H1 (cell line): ENCODE measurements at regions of chr11 and their contacts with region 1.

Region 1: GRCh38 chr11:124758317-124759203 is 3.5 kb downstream of the ESAM start:
- DNase-seq: peak; percentile 70 to 90
- H3K4me3 ChIP-seq: peak overlapping the region; percentile 18 to 58 (median 34); a peak in 7 of 8 replicates
- H3K27ac ChIP-seq: no peak overlapping the region
- H3K4me1 ChIP-seq: peaks cover 6 to 43% (median 27%) of the 10 kb centered on the region in 4 experiments
- H3K27me3 ChIP-seq: peaks cover 76 to 98% (median 91%) of the 10 kb centered on the region in 4 experiments
- CTCF ChIP-seq: peak; percentile 74 to 88 (median 86)
- EP300 ChIP-seq: no peak
- POLR2A ChIP-seq: no peak
- RAD21 ChIP-seq: peak; percentile 51 to 65

Region 2: DNA sequence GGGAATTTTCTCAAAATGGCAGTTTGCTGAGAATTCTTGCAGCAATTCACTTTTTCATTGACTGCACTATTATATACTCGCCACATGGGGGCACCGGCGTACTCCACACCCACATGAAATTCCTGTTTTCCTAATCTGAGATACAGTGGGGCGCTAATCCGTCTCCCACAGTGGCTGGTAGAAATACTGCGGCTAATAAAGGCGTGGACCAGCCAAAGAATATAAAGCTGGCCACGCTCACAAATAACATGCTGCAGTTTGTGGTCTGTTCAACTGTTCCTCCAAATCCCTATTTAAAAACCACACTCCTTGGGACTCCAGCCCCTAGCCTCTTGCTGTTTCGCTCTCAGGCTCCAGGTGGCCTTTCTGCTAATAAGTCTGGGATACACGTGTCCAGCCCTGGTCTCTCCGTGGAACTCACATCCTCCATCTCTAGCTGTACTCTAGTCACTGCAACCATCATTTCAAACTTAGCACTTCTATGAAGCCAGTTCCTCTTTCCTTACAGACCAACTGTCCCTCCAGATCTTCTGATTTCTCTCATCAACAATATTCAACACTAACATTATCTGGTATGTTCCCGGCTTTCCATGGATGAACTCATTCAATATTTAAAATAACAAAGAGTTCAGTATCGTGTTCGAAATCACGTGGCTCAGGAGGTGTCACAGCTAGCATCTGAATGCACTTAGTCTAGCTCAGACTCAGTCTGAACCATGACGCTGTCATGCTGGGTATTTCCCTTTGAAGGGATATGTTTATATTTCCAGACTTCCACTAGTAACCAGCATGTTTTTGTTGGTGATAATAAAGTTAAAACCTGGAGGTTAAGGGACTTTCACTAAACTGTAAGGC is 113.9 kb before region 1 on chr11:
- CTCF ChIA-PET with region 1: interaction called, 69 read pairs
- POLR2A ChIA-PET with region 1: interaction called, 4 read pairs
- DNase-seq: peak in 1 of 2 experiments; percentile 68
- H3K4me3 ChIP-seq: peak overlapping the region in 1 of 4 experiments; percentile 37; a peak in 2 of 8 replicates
- H3K27ac ChIP-seq: no peak overlapping the region
- H3K4me1 ChIP-seq: peaks cover 0 to 4% (median 2%) of the 10 kb centered on the region in 4 experiments; a peak in 3 of 7 replicates
- H3K27me3 ChIP-seq: no peaks in the 10 kb centered on the region
- CTCF ChIP-seq: peak; percentile 38 to 87 (median 75)
- EP300 ChIP-seq: no peak
- POLR2A ChIP-seq: no peak
- RAD21 ChIP-seq: peak; percentile 85

Region 3: GRCh38 chr11:124673333-124674167 is 85.0 kb before region 1 on chr11 and contains the starts of genes SIAE and SPA17:
- CTCF ChIA-PET with region 1: interaction called, 56 read pairs
- POLR2A ChIA-PET with region 1: interaction called, 5 read pairs
- DNase-seq: peak; percentile 86 to 96
- H3K4me3 ChIP-seq: peak within 1 kb of the TSS; percentile 71 to 90 (median 79)
- H3K27ac ChIP-seq: no peak within 1 kb of the TSS
- H3K4me1 ChIP-seq: no peaks in the 10 kb centered on the region; a peak in 1 of 7 replicates
- H3K27me3 ChIP-seq: peaks cover 0 to 15% (median 5%) of the 10 kb centered on the region in 4 experiments; a peak in 6 of 7 replicates
- CTCF ChIP-seq: no peak
- EP300 ChIP-seq: peak in 1 of 2 experiments; percentile 82; a peak in 1 of 3 replicates
- POLR2A ChIP-seq: peak in 1 of 2 experiments; percentile 80; a peak in 2 of 3 replicates
- RAD21 ChIP-seq: no peak
- total RNA-seq, gene SIAE: 1.7 and 2.3 TPM in 2 replicates
- total RNA-seq, gene SPA17: 4.2 and 5.2 TPM in 2 replicates

Region 4: DNA sequence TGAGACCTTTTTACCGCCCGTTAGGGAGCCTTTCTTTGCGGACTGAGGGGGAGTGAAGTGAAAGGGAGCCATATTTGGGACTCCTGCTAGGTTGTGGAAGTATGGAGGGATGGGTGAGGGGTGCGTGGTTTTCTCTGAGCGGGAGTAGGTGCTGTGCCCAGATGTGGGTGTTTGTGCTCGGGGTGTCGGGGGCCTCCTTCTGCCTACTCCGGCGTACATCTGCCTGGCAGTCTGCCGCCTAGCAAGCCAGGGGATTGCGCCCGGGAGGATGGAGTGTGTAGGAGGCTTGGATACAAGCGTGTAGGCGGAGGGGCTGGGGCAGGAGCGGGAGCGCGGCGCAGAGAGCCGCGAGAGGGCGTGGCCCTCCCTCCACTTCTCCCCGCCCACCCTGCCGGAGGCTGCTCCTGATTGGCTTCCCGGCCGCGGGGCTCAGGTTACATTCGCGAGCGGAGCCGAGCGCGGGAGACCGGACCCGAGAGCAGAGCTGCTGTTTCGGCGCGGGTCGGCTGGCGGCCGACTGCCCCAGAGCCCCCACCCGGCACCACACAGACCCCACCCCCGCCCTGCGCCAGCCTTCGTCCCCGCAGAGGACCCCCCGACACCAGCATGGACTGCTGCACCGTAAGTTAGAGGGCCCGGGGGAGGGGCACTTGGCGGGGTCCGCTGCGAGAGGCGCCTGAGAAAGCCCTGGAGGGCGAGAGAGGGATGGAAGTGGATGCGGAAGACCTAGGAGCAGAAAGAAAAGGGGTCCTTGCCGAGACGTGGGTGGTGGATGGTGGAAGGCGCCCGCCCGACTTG is 18.9 kb before region 1 on chr11 and contains the start of gene NRGN:
- CTCF ChIA-PET with region 1: interaction called, 382 read pairs
- POLR2A ChIA-PET with region 1: interaction called, 13 read pairs
- DNase-seq: peak; percentile 76 to 95
- H3K4me3 ChIP-seq: peak within 1 kb of the TSS; percentile 40 to 68 (median 62)
- H3K27ac ChIP-seq: no peak within 1 kb of the TSS
- H3K4me1 ChIP-seq: peaks cover 0 to 15% (median 2%) of the 10 kb centered on the region in 4 experiments; a peak in 5 of 7 replicates
- H3K27me3 ChIP-seq: peaks cover 69 to 93% (median 83%) of the 10 kb centered on the region in 4 experiments
- CTCF ChIP-seq: no peak
- EP300 ChIP-seq: no peak
- POLR2A ChIP-seq: no peak
- RAD21 ChIP-seq: no peak
- total RNA-seq, gene NRGN: 0.60 and 0.75 TPM in 2 replicates

Region 5: DNA sequence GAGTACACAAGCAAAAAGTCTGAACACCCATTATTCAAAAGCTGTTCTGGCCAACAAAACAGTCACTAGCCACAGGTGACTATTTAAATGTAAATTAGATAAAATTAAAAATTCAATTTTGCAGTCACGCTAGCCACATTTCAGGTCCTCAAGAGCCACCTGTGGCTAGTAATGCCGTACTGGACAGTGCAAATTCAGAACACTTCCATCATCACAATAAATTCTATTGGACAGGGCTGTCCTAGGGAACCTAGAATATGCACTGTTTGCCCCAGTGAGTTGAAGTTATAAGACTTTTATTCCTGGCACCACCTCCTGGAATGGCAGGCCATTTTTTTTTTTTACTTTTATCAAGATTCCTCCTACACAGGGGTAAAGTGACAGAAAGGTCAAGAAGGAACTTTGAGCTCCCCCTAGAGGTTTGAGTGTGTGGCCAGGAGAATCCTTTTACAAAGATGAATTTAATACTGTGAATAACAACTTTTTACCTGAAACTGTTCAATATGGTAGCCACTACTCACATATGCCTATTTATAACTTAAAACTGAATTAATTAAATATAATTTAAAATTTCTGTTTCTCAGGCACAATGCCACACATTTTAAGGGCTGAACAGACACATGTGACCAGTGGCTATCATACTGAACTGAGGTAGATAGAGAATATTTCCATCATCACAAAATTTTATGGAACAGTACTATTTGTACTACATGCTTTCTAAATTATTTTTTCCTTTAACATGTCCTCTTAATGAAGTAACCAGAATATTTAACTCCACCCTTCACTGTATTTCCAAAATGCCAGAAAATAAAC is 35.1 kb after region 1 on chr11:
- CTCF ChIA-PET with region 1: interaction called, 111 read pairs
- POLR2A ChIA-PET with region 1: interaction called, 26 read pairs
- DNase-seq: no peak
- H3K4me3 ChIP-seq: peak overlapping the region in 1 of 4 experiments; percentile 44; a peak in 1 of 8 replicates
- H3K27ac ChIP-seq: no peak overlapping the region
- H3K4me1 ChIP-seq: peaks cover 3 to 28% (median 7%) of the 10 kb centered on the region in 4 experiments; a peak in 6 of 7 replicates
- H3K27me3 ChIP-seq: no peaks in the 10 kb centered on the region
- CTCF ChIP-seq: peak in 2 of 3 experiments; percentile 43 to 62; a peak in 3 of 4 replicates
- EP300 ChIP-seq: no peak
- POLR2A ChIP-seq: no peak
- RAD21 ChIP-seq: peak; percentile 52 to 54

Region 6: DNA sequence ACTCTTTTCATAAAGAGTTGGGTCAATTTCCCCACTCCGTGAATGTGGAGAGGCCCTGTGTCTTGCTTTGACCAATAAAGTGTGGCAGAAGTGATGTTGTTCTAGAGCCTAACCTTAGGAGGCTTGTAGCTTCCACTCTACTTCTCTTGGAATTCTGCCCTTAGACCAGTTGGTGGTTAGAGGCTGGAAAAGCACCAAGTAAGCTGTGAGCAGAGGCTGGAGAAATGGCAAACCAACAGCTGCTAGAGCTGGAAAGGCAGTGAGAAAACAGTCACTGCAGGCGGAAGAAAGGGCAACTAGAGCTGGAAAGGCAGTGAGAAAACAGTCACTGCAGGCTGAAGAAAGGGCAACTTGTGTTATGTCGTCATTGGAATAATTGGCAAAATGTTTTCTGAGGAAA is 71.4 kb after region 1 on chr11:
- CTCF ChIA-PET with region 1: interaction called, 14 read pairs
- POLR2A ChIA-PET with region 1: interaction called, 3 read pairs
- DNase-seq: no peak
- H3K4me3 ChIP-seq: no peak overlapping the region
- H3K27ac ChIP-seq: no peak overlapping the region
- H3K4me1 ChIP-seq: no peaks in the 10 kb centered on the region; a peak in 1 of 7 replicates
- H3K27me3 ChIP-seq: no peaks in the 10 kb centered on the region; a peak in 1 of 7 replicates
- CTCF ChIP-seq: no peak
- EP300 ChIP-seq: no peak
- POLR2A ChIP-seq: no peak
- RAD21 ChIP-seq: no peak

Region 7: DNA sequence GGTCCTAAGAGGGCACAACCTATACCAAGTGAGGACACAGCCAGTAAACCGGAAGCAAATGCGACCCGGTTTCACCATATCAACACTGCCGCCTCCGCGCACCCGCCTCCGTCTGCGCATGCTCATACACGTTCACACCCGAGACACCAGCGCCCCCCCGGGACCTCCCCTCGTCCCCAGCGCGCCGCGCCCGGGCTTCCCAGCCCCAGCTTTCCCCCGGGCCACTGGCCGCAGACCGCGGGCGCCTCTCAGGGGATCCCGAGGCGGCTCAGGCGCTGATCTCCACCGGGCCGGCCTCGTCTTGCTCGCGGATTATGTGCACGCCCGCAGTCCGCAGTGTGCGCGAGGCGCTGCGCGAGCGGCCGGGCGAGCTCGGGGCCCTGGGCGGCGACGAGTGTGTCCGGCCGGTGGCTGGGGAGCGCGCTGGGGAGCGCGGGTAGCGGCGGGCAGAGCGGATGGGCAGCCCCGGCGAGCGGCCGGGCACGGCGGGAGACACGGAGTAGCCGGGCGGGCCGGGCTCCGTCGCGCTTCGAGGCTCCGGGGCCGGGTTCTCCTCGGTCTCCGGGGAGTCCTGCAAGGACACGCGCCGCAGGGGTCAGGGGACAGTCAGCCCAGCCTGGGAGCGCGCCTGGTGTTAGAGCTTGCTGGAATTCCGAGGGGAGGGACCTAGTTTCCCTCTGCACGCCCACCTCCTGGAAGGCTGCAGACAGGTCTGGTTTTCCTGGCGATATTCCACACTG is 162.5 kb after region 1 on chr11:
- CTCF ChIA-PET with region 1: no interaction called
- POLR2A ChIA-PET with region 1: no interaction called
- DNase-seq: peak in 1 of 2 experiments; percentile 83
- H3K4me3 ChIP-seq: peak overlapping the region; percentile 35 to 57 (median 44)
- H3K27ac ChIP-seq: no peak overlapping the region
- H3K4me1 ChIP-seq: peaks cover 0 to 4% (median 2%) of the 10 kb centered on the region in 4 experiments; a peak in 3 of 7 replicates
- H3K27me3 ChIP-seq: peaks cover 9 to 59% (median 44%) of the 10 kb centered on the region in 4 experiments
- CTCF ChIP-seq: no peak
- EP300 ChIP-seq: no peak
- POLR2A ChIP-seq: no peak
- RAD21 ChIP-seq: no peak; a peak in 2 of 4 replicates